ENCODE measurements at regions of chr4 and their contacts with region 1.

Region 1: DNA sequence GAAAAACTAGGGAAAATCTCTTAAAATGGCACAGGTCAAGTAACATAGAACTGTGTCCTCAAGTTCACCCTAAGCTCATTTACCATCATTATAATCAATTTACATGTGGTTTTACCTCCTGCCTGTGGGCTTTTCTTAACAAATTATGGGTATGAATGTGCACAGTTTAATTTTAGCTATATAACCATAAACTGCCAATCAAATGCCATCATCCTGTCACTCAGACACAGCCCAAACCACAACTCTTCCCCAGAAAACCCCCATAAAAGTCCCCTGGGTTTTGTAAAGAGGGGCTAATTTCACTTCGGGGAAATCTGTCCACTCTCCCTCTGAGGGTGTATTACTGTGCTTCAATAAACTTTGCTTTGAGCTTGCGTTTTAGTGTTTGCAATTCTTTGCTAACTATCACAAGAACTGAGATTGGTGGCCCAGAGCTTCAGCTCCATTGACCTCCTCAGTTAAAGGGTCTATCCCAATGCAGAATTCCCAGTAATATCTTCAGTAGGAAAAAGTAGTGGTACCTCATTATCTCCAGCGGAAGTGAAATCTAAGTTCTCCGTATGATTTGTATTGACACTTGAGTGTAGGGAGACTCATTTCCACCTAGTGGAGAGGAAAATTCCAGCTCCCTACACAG is 394.6 kb downstream of the SPOCK3 start:
- DNase-seq: no peak
- H3K4me3 ChIP-seq: no peak overlapping the region
- H3K27ac ChIP-seq: no peak overlapping the region
- H3K4me1 ChIP-seq: peaks cover 0 to 5% (median 1%) of the 10 kb centered on the region in 4 donors
- H3K27me3 ChIP-seq: no peaks in the 10 kb centered on the region
- CTCF ChIP-seq: no peak
- EP300 ChIP-seq: no peak
- POLR2A ChIP-seq: no peak

Region 2: DNA sequence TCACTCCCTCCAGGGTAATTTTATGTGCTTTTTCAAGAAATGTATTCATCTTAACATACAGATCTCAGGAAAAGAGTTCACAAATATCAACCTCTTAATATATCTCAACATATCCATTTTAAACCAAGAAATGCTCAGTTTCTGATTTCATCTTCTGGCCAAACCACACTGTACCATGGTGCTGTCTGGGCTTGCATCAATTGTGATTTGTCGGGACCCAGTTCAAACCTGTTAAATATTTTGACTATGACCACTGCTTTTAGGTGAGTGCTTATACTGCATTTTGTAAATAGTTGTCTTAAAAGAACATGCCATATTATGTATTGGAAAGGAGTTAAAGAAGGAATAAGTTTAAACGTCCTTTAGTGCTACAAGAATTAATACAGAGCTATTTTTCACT is 42.5 kb after region 1 on chr4:
- in situ Hi-C with region 1: no loop called
- intact Hi-C with region 1: loop called (anchors 1 kb)
- DNase-seq: no peak
- H3K4me3 ChIP-seq: no peak overlapping the region
- H3K27ac ChIP-seq: no peak overlapping the region
- H3K4me1 ChIP-seq: no peaks in the 10 kb centered on the region
- H3K27me3 ChIP-seq: no peaks in the 10 kb centered on the region
- CTCF ChIP-seq: no peak
- EP300 ChIP-seq: no peak
- POLR2A ChIP-seq: no peak

Region 3: GRCh38 chr4:167234316-167234881 is 394.7 kb after region 1 on chr4 and contains the start of gene SPOCK3:
- in situ Hi-C with region 1: no loop called
- intact Hi-C with region 1: no loop called
- DNase-seq: no peak
- H3K4me3 ChIP-seq: peak within 1 kb of the TSS in 3 of 4 donors; percentile 3 to 43 (median 3)
- H3K27ac ChIP-seq: no peak within 1 kb of the TSS
- H3K4me1 ChIP-seq: no peaks in the 10 kb centered on the region
- H3K27me3 ChIP-seq: peaks cover 41% of the 10 kb centered on the region
- CTCF ChIP-seq: no peak
- EP300 ChIP-seq: no peak
- POLR2A ChIP-seq: no peak
- total RNA-seq, gene SPOCK3: 0.27 to 0.64 TPM in 2 of 4 donors, not detected in the others